K562 (cell line): ENCODE measurements at regions of chr22 and their contacts with region 1.

Region 1: DNA sequence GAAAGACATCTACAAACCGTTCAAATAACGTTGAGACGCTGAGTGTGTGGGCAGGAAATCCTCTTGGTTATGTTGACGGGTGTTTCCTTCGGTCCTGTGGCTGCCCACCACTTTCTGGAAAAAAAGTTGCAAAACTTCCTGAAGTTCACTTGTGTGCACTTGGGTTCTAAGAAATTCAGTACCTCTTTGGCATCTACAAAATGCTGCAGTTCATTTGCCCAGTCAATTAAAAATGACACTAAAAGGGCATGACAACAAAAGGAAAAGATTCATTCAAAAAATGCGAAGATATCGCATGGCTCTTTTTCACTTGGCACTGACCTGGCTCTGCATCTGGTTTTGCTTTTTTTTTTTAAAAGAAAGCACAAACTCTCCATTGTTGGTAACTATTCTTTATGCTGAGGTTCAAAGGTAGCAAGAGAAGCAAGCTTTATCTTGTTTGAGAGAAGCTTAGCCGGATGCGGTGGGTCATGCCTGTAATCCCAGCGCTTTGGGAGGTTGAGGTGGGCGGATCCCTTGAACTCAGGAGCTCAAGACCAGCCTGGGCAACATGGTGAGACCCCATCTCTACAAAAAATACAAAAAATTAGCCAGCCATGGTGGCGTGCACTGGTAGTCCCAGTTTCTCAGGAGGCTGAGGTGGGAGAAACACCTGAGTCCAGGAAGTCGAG is 10.6 kb upstream of the XBP1 start:
- DNase-seq: no peak
- ATAC-seq: no peak
- H3K4me3 ChIP-seq: no peak overlapping the region
- H3K27ac ChIP-seq: peak overlapping the region; percentile 5; the same call in 1 of the 3 replicates
- H3K4me1 ChIP-seq: peaks cover 11 to 13% of the 10 kb centered on the region in 2 experiments; a peak in 4 of 5 replicates
- H3K27me3 ChIP-seq: no peaks in the 10 kb centered on the region
- CTCF ChIP-seq: no peak
- EP300 ChIP-seq: no peak
- POLR2A ChIP-seq: no peak
- RAD21 ChIP-seq: no peak

Region 2: DNA sequence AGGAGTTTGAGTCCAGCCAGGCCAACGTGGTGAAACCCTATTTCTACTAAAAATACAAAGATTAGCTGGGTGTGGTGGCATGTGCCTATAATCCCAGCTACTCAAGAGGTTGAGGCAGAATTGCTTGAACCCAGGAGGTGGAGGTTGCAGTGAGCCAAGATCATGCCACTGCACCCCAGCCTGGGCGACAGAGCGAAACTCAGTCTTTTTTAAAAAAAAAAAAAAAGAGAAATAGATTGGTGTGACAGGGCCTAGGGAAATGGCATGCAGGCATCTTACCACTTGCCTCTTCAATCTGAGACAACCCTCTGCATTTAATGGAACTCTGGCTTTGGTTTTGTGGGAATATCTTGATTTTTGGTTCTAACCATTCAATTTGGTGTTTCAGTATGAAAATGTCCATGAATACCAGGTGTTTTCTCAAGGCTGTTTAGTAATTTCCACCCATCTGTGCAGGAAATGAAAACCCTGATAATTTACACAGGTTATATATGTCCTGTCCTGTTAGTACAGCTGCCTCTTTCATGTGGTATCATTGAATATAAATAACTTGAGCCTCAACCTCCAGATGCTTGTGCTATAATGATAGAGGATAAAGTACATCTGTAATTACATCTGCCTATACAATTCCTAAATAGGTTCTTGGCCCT is 19.0 kb before region 1 on chr22:
- CTCF ChIA-PET with region 1: no interaction called
- POLR2A ChIA-PET with region 1: interaction called, 10 read pairs
- in situ Hi-C with region 1: no loop called
- intact Hi-C with region 1: no loop called
- DNase-seq: no peak
- ATAC-seq: no peak; the same call in 1 of the 3 replicates
- H3K4me3 ChIP-seq: no peak overlapping the region
- H3K27ac ChIP-seq: no peak overlapping the region
- H3K4me1 ChIP-seq: peaks cover 3 to 5% of the 10 kb centered on the region in 2 experiments; a peak in 3 of 5 replicates
- H3K27me3 ChIP-seq: no peaks in the 10 kb centered on the region
- CTCF ChIP-seq: no peak
- EP300 ChIP-seq: no peak
- POLR2A ChIP-seq: no peak
- RAD21 ChIP-seq: no peak

Region 3: DNA sequence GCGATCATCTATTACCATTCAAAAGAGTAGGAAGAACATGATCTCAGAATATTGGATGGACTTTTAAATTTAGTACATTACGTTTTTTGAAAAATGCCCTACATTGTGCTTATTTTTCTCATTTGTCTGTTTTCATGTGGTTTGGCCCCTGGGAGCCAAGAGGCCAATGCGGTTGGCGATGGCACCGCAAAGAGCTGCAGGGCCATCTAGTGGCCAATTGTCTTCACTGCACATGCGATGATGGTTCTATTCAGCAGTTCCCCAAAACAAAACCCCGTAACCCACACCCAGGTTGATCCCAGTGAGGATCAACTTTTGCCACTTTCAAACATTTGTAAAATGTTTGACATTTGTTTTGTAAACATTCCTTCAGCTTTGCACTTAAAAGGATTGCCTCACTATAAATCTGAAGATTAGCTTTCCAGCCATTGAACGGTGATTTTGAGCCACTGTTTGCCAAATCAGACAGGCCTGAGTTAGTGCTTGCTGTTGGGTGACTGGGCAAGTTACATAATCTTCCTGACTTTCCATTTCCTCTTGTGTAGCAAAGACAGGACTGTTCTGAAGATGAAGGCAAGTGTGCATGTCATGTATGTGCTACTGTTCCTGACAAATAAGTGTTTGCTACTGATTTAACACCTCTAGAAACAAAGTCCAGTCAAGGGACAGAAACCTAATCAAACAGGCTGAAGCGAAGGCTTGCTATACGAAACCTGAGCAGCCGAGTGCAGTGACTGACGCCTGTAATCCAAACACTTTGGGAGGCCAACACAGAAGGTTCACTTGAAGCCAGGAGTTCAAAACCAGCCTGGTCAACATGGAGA is 18.6 kb after region 1 on chr22:
- CTCF ChIA-PET with region 1: no interaction called
- POLR2A ChIA-PET with region 1: no interaction called
- in situ Hi-C with region 1: no loop called
- intact Hi-C with region 1: no loop called
- DNase-seq: peak; percentile 59 to 78 (median 74)
- ATAC-seq: peak; percentile 88
- H3K4me3 ChIP-seq: no peak overlapping the region
- H3K27ac ChIP-seq: no peak overlapping the region
- H3K4me1 ChIP-seq: no peaks in the 10 kb centered on the region
- H3K27me3 ChIP-seq: no peaks in the 10 kb centered on the region
- CTCF ChIP-seq: peak; percentile 80 to 92 (median 88)
- EP300 ChIP-seq: no peak
- POLR2A ChIP-seq: no peak
- RAD21 ChIP-seq: peak; percentile 89 to 94